Left colon (tissue), 2 donors: ENCODE measurements at regions of chr6 and their contacts with region 1.

Region 1: GRCh38 chr6:160930547-160931377 is 60.8 kb upstream of the MAP3K4 start:
- DNase-seq: peak; percentile 47 to 71
- ATAC-seq: peak; percentile 92

Region 2: DNA sequence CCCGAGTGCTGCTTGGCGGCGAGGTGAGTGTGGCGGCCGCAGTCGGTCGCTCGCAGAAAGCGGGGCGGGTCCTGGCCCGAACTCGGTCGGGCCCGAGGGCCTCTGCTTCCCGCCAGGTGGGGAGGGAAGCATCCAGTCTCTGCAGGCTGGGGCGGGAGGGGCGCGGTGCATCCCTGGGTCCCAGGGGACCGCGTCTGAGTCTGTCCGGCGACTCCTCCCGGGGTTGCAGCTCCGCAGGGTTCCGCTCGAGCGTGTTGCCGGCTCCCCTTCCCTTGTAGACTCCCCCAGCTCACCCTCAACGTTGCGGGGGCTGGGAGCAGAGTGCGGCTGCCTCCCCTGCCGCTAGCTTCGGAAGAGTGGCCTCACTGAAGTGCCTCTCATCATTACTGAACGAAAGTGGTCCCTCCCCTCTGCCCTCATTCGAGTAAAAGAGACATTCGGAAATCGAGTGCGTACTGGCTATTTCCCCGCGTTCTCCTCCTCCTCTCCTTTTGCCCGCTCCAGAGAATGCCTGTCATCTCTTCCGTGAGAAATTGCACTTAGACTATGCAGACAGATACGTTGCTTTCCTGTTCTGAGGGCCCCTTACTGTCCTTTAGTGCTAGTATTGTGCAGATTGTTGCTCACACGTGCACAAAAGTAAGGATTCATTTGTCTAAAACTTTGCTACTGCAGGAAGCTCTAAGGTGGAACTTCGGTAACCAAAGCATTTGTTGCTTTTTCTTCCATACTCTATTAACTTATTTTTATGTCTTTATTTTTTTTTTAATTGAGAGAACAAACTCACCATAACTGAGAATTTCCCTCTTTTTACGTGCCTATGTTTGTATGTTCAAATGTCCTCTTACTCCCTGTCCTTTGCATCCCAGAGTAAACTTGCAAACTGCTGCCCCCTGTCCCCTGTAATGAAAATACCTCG is 61.6 kb after region 1 on chr6:
- intact Hi-C with region 1: loop called in 1 of 2 experiments (anchors 10 kb)
- DNase-seq: peak; percentile 41 to 56
- ATAC-seq: peak; percentile 64

Region 3: GRCh38 chr6:161370880-161371279 is 440.1 kb after region 1 on chr6:
- intact Hi-C with region 1: loop called (anchors 5 to 10 kb)
- DNase-seq: peak; percentile 49 to 58
- ATAC-seq: peak; percentile 47

Region 4: DNA sequence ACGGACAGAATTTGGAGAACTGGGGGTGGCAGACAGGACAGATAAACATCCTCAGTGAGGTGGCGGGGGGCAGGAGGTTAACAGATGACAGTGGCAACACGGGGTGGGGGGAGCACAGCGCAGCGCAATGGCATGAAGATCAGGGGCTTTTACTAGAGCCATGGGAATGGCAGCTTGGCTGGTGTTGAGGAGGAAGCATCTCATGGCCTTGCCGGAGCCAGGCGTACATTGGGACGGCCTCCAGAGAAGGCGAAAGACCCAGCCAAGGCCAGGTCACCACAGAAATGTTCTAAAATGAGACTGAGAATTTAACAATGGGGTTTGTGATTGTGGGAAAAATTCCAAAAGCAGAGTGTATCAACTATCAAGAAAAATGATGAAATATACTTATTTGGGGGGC is 1623.8 kb after region 1 on chr6:
- intact Hi-C with region 1: no loop called
- DNase-seq: no peak
- ATAC-seq: no peak